ENCODE measurements at regions of chr6 and their contacts with region 1.

Region 1: GRCh38 chr6:121216928-121217327 is 117.4 kb downstream of the TBC1D32 start:
- DNase-seq: no peak
- ATAC-seq: no peak
- H3K4me3 ChIP-seq: no peak overlapping the region
- H3K27ac ChIP-seq: no peak overlapping the region
- H3K4me1 ChIP-seq: no peaks in the 10 kb centered on the region
- H3K27me3 ChIP-seq: no peaks in the 10 kb centered on the region
- CTCF ChIP-seq: no peak

Region 2: GRCh38 chr6:121042766-121043165 is 174.2 kb before region 1 on chr6:
- CTCF ChIA-PET with region 1: no interaction called
- POLR2A ChIA-PET with region 1: interaction called, 15 read pairs
- in situ Hi-C with region 1: no loop called
- intact Hi-C with region 1: no loop called
- DNase-seq: no peak
- ATAC-seq: no peak
- H3K4me3 ChIP-seq: no peak overlapping the region
- H3K27ac ChIP-seq: no peak overlapping the region
- H3K4me1 ChIP-seq: no peaks in the 10 kb centered on the region
- H3K27me3 ChIP-seq: no peaks in the 10 kb centered on the region
- CTCF ChIP-seq: no peak

Measured in Panc1 (cell line).